Activated CD4-positive, alpha-beta T cell treated with anti-CD3 and anti-CD28 coated beads for 36 hours (primary cell): ENCODE measurements at regions of chr17 and their contacts with region 1.

Region 1: GRCh38 chr17:50853015-50853615 is 13.0 kb downstream of the TOB1 start:
- DNase-seq: no peak
- ATAC-seq: no peak
- H3K4me3 Mint-ChIP-seq: no peak overlapping the region
- H3K27ac Mint-ChIP-seq: peak overlapping the region; percentile 78
- H3K4me1 Mint-ChIP-seq: peaks cover 13% of the 10 kb centered on the region
- H3K27me3 Mint-ChIP-seq: no peaks in the 10 kb centered on the region

Region 2: DNA sequence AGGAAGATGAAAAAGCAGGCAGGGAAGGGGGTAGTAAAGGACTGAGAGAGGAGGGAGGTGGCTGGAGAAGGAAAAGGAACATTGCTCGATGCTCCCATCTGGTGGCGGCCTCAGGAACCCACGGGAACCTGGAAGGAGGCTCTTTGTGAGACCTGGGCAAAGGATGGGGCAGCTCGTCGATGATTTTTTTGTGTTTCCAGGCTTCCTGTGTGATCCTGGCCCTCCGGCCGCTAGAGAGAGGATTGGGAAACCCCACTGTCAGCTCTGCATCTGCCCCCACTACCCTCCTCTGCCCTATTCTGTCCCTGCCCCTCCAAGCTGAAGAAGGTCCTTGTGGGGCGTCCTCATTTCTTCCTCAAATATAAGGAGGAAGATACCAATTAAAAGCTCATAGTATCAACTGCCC is 11.2 kb before region 1 on chr17:
- CTCF ChIA-PET with region 1: interaction called, 19 read pairs
- POLR2A ChIA-PET with region 1: no interaction called
- intact Hi-C with region 1: no loop called
- DNase-seq: peak; percentile 77
- ATAC-seq: peak; percentile 85
- H3K4me3 Mint-ChIP-seq: no peak overlapping the region
- H3K27ac Mint-ChIP-seq: no peak overlapping the region
- H3K4me1 Mint-ChIP-seq: no peaks in the 10 kb centered on the region
- H3K27me3 Mint-ChIP-seq: no peaks in the 10 kb centered on the region

Region 3: GRCh38 chr17:50931144-50931908 is 78.2 kb after region 1 on chr17:
- CTCF ChIA-PET with region 1: interaction called, 10 read pairs
- POLR2A ChIA-PET with region 1: interaction called, 4 read pairs
- intact Hi-C with region 1: no loop called
- DNase-seq: peak; percentile 66
- ATAC-seq: peak; percentile 80
- H3K4me3 Mint-ChIP-seq: peak overlapping the region; percentile 73
- H3K27ac Mint-ChIP-seq: peak overlapping the region; percentile 86
- H3K4me1 Mint-ChIP-seq: peaks cover 17% of the 10 kb centered on the region
- H3K27me3 Mint-ChIP-seq: no peaks in the 10 kb centered on the region

Region 4: DNA sequence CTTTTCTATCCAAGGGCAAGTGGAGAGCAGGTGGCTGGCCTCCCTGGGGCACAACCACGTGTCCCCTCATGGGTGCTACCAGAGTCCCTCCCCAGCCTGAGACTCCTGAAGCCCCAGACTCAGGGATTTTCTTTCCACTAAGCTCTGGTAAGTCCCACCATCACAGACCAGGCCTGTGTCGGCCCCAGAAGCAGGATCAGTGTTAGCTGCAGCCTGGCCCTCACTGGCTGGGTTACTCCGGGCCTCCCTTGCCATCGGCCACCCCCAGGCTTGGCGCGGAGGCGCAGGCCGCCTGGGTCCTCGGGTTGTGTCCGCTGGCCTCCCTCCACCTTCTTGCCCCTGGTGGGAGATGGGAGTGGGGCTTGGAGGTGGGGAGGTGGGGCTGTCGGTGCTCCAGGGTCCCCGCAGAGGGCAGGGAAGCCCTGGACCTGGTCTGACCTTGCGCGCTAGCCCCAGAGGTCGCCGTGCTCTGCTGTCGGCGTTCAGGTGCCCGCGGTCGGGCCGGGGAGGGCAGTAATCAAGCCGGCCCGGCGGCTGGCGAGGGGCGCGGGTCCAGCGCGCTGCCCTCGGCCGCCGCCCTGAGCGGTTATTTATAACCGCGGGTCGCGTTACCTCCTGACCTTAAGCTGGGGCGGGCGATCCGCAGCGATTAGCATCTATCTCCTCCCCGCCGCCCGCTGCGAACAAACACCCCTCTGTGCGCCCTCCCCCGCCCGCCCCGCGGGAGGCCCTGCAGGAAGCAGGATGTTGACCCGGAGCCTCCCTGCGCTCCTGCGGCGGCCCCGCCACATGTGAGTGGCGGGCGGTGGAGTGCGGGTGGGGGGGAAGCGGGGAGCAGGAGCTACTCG is 91.2 kb after region 1 on chr17:
- CTCF ChIA-PET with region 1: interaction called, 38 read pairs
- POLR2A ChIA-PET with region 1: no interaction called
- intact Hi-C with region 1: loop called in 1 of 2 experiments (anchors 2 kb)
- DNase-seq: peak; percentile 88
- ATAC-seq: peak; percentile 89
- H3K4me3 Mint-ChIP-seq: peak overlapping the region; percentile 71
- H3K27ac Mint-ChIP-seq: peak overlapping the region; percentile 81
- H3K4me1 Mint-ChIP-seq: peaks cover 23% of the 10 kb centered on the region
- H3K27me3 Mint-ChIP-seq: no peaks in the 10 kb centered on the region

Region 5: DNA sequence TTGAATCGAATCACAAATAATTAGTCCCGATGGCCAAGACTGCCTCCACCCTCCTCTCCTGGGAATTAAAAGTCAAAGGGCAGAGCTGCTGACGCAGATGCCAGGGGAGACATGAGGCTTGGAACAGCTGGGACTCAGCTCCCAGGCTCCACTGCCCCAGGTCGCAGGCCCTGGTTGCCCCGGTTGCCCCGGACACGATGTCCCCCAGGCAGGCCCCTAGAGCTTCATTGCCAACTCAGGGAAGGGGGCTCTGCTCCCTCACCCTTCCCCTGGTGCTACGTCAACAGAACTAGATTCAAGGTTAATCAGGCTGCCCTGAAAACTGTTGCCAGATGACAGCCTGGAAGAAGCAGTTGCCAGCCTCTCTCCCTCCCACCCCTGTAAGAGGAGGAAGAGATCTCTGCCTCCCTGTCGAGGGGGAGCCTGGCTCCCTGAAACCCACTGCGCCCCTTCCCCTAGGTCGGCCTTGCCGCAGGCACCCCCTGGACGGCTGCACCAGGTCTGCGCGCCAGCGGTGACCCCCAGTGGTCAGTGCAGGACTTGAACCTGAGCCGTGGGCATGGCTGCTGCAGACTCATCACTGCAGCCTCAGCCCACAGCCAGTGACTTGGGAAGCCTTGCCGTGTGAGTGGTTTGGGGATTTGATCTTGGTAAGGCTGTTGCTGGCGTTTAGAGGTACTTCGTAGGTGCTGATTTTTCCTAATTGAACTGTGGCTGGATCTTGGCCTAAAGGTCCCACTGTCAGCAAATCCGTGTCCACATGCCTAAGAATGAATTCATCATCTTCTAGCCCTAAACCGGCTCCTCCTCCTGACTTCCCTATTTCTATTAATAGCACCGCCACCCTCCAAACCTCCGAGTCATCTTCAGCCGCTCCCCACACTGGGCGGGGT is 97.1 kb after region 1 on chr17:
- CTCF ChIA-PET with region 1: interaction called, 120 read pairs
- POLR2A ChIA-PET with region 1: no interaction called
- intact Hi-C with region 1: loop called (anchors 1 to 2 kb)
- DNase-seq: peak; percentile 76
- ATAC-seq: peak; percentile 88
- H3K4me3 Mint-ChIP-seq: no peak overlapping the region
- H3K27ac Mint-ChIP-seq: no peak overlapping the region
- H3K4me1 Mint-ChIP-seq: peaks cover 16% of the 10 kb centered on the region
- H3K27me3 Mint-ChIP-seq: no peaks in the 10 kb centered on the region

Region 6: GRCh38 chr17:50956750-50957523 is 103.8 kb after region 1 on chr17:
- CTCF ChIA-PET with region 1: interaction called, 120 read pairs
- POLR2A ChIA-PET with region 1: interaction called, 4 read pairs
- intact Hi-C with region 1: loop called (anchors 1 kb)
- DNase-seq: peak; percentile 80
- ATAC-seq: peak; percentile 98
- H3K4me3 Mint-ChIP-seq: no peak overlapping the region
- H3K27ac Mint-ChIP-seq: no peak overlapping the region
- H3K4me1 Mint-ChIP-seq: peaks cover 2% of the 10 kb centered on the region
- H3K27me3 Mint-ChIP-seq: no peaks in the 10 kb centered on the region

Region 7: DNA sequence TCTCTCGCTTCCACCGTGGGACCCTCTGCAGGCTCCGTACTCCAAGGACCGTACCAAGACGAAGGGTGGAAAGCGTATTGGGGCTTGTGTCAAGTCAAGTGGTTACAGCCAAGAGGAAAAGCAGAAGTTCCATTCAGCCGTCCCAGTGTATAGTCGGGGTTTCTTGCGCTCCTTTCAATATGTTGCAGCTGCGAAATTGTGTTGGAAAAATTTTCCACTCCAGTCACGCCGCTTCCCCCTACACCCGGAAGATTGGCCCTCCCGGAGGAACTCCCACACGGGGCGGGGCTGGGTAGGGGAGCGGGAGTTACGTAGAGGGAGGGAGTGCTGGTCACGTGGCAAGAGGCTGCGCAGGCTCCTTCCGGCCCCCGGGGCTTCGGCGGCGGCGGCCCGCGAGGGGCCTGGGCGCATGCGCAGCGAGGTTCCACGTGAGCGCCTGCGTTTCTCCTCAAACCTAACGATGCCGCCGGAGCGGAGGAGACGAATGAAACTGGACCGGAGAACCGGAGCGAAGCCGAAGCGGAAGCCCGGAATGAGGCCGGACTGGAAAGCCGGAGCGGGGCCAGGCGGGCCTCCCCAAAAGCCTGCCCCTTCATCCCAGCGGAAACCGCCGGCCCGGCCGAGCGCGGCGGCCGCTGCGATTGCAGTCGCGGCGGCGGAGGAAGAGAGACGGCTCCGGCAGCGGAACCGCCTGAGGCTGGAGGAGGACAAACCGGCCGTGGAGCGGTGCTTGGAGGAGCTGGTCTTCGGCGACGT is 407.2 kb after region 1 on chr17 and contains the start of gene UTP18:
- CTCF ChIA-PET with region 1: no interaction called
- POLR2A ChIA-PET with region 1: no interaction called
- intact Hi-C with region 1: no loop called
- DNase-seq: peak; percentile 98
- ATAC-seq: peak; percentile 84
- H3K4me3 Mint-ChIP-seq: peak within 1 kb of the TSS; percentile 84
- H3K27ac Mint-ChIP-seq: peak within 1 kb of the TSS; percentile 97
- H3K4me1 Mint-ChIP-seq: peaks cover 61% of the 10 kb centered on the region
- H3K27me3 Mint-ChIP-seq: no peaks in the 10 kb centered on the region
- total RNA-seq, gene UTP18: 49.3 to 74.0 TPM

Region 8: DNA sequence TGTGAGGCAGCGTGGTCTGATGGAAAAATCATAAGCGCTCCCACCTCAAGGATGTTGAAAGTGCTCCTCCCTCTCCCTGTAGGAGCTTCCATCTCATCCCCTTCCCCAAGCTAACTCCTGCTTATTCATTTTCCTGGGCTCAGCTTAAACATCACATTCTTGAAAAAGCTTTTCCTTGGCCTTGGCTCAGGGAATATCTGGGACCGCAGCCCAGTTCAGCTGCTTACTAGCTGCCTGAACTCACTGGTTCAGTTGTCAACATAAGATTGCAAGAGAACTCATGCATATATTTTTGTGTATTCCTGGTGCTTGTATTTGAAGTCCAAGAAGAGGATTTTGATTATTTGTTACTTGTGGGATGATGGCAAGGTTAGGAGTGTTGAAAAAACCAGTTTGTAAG is 498.8 kb after region 1 on chr17:
- CTCF ChIA-PET with region 1: no interaction called
- POLR2A ChIA-PET with region 1: no interaction called
- intact Hi-C with region 1: no loop called
- DNase-seq: no peak
- ATAC-seq: no peak
- H3K4me3 Mint-ChIP-seq: no peak overlapping the region
- H3K27ac Mint-ChIP-seq: no peak overlapping the region
- H3K4me1 Mint-ChIP-seq: no peaks in the 10 kb centered on the region
- H3K27me3 Mint-ChIP-seq: no peaks in the 10 kb centered on the region